ENCODE measurements at regions of chr15 and their contacts with region 1.

Region 1: DNA sequence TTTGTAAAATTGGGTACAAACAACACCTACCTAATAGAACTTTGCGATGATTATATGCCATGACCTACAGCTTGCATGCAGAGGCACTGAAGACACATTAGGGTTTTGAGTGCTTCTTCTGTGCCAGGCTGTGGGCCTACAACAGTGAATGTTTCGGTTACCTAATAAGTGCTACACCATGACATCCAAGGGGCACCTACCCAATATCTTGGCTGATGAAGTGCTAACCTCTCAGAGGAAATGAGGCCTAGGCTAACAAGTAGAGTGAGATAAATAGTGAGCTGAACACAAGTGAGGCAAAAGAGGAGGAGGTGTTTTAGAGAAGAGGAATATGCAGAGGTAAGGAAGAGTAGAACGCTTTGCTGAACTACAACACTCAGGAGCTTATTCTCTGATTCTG is 12.2 kb upstream of the RASGRP1 start:
- DNase-seq: peak in 2 of 9 experiments; percentile 62 to 82
- ATAC-seq: peak; percentile 72
- H3K4me3 ChIP-seq: no peak overlapping the region
- H3K4me3 Mint-ChIP-seq: peak overlapping the region; percentile 42
- H3K27ac ChIP-seq: peak overlapping the region; percentile 34 to 76
- H3K27ac Mint-ChIP-seq: peak overlapping the region; percentile 84
- H3K4me1 ChIP-seq: peaks cover 35% of the 10 kb centered on the region
- H3K4me1 Mint-ChIP-seq: peaks cover 39% of the 10 kb centered on the region
- H3K27me3 ChIP-seq: no peaks in the 10 kb centered on the region
- H3K27me3 Mint-ChIP-seq: no peaks in the 10 kb centered on the region
- CTCF ChIP-seq: no peak

Region 2: GRCh38 chr15:38490242-38490922 is 86.5 kb before region 1 on chr15:
- CTCF ChIA-PET with region 1: no interaction called
- POLR2A ChIA-PET with region 1: no interaction called
- intact Hi-C with region 1: no loop called
- DNase-seq: no peak
- ATAC-seq: no peak
- H3K4me3 ChIP-seq: no peak overlapping the region
- H3K4me3 Mint-ChIP-seq: no peak overlapping the region
- H3K27ac ChIP-seq: peak overlapping the region in 1 of 2 experiments; percentile 17
- H3K27ac Mint-ChIP-seq: peak overlapping the region; percentile 66
- H3K4me1 ChIP-seq: peaks cover 14% of the 10 kb centered on the region
- H3K4me1 Mint-ChIP-seq: peaks cover 36% of the 10 kb centered on the region
- H3K27me3 ChIP-seq: no peaks in the 10 kb centered on the region
- H3K27me3 Mint-ChIP-seq: no peaks in the 10 kb centered on the region
- CTCF ChIP-seq: no peak

Region 3: GRCh38 chr15:38610748-38611147 is 33.9 kb after region 1 on chr15:
- CTCF ChIA-PET with region 1: no interaction called
- POLR2A ChIA-PET with region 1: interaction called, 3 read pairs
- intact Hi-C with region 1: loop called in 1 of 2 experiments (anchors 5 kb)
- DNase-seq: peak in 3 of 9 experiments; percentile 28 to 53 (median 28)
- ATAC-seq: peak; percentile 78
- H3K4me3 ChIP-seq: no peak overlapping the region
- H3K4me3 Mint-ChIP-seq: peak overlapping the region; percentile 13
- H3K27ac ChIP-seq: peak overlapping the region in 1 of 2 experiments; percentile 69
- H3K27ac Mint-ChIP-seq: peak overlapping the region; percentile 93
- H3K4me1 ChIP-seq: peaks cover 41% of the 10 kb centered on the region
- H3K4me1 Mint-ChIP-seq: peaks cover 54% of the 10 kb centered on the region
- H3K27me3 ChIP-seq: no peaks in the 10 kb centered on the region
- H3K27me3 Mint-ChIP-seq: no peaks in the 10 kb centered on the region
- CTCF ChIP-seq: no peak

Region 4: DNA sequence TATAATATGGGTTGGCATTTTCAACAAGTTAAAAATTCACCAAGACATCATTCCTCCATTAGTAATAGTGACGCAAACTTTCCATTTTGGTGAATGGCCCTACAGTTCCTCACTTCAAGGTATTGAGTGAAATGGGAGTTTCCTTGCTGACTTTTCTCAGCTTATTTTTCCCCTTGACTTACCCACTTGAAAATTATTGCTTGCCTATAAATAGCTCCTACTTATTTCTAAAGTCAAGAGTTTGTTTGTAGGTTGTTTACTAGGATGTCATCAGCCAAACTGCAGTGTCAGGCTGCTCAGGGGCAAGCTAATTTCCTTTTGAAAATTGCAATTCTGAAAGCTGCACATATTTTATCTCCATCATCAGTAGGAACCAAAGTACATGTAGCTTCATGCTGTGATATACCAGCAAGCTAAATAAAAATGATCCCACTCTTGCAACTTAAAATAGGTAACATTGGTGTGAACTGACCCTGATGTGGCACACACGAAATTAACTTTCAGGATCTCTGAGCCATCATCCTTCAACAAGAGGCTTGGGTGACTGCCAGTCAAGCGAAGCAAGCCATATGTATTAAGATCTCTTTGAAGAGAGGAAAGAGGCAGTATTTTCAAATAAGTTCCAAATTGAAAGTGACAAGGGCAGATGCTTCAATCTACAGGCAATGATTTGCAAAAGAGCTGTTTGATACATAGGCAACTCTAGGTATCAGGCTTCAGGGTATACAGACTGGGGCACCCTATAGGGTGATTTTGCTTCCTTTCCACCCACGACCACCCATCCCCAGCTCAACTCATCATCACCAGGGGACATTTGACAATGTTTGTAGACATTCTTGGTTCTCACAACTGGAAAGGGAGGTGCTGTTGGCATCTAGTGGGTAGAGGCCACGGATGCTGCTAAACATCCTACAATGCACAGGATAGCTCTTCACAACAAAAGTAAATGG is 54.6 kb after region 1 on chr15:
- CTCF ChIA-PET with region 1: interaction called, 3 read pairs
- POLR2A ChIA-PET with region 1: no interaction called
- intact Hi-C with region 1: loop called in 1 of 2 experiments (anchors 5 kb)
- DNase-seq: no peak
- ATAC-seq: no peak
- H3K4me3 ChIP-seq: no peak overlapping the region
- H3K4me3 Mint-ChIP-seq: peak overlapping the region; percentile 1
- H3K27ac ChIP-seq: no peak overlapping the region
- H3K27ac Mint-ChIP-seq: peak overlapping the region; percentile 3
- H3K4me1 ChIP-seq: peaks cover 19% of the 10 kb centered on the region
- H3K4me1 Mint-ChIP-seq: peaks cover 26% of the 10 kb centered on the region
- H3K27me3 ChIP-seq: no peaks in the 10 kb centered on the region
- H3K27me3 Mint-ChIP-seq: no peaks in the 10 kb centered on the region
- CTCF ChIP-seq: no peak